Activated naive CD4-positive, alpha-beta T cell treated with anti-CD3 and anti-CD28 coated beads for 36 hours (primary cell): ENCODE measurements at regions of chr15 and their contacts with region 1.

Region 1: GRCh38 chr15:51982013-51982769 is 10.6 kb upstream of the LEO1 start:
- DNase-seq: peak; percentile 52
- H3K4me3 Mint-ChIP-seq: peak overlapping the region; percentile 62
- H3K27ac Mint-ChIP-seq: peak overlapping the region; percentile 25
- H3K4me1 Mint-ChIP-seq: peaks cover 10% of the 10 kb centered on the region
- H3K27me3 Mint-ChIP-seq: no peaks in the 10 kb centered on the region

Region 2: DNA sequence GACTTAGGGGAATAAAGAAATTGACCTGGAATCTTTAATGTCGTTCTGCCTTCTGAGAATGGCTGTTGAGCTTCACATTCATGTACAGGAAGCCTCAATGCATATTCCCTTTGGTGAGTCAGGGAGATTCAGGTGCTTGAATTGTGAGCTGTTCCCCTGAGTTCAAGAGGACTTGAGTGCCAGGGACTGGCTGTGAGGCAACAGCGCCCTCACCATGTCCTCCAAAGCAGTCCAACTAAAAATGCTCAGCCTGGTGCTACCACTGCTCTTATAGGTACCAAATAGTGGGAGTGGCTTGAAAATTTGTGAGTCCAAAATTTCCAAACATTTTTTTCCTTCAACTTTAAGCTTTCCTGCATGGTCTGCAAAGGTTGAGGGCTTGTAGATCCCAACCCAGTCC is 64.7 kb before region 1 on chr15:
- CTCF ChIA-PET with region 1: no interaction called
- intact Hi-C with region 1: no loop called
- DNase-seq: peak; percentile 36
- H3K4me3 Mint-ChIP-seq: no peak overlapping the region
- H3K27ac Mint-ChIP-seq: no peak overlapping the region
- H3K4me1 Mint-ChIP-seq: no peaks in the 10 kb centered on the region
- H3K27me3 Mint-ChIP-seq: no peaks in the 10 kb centered on the region

Region 3: DNA sequence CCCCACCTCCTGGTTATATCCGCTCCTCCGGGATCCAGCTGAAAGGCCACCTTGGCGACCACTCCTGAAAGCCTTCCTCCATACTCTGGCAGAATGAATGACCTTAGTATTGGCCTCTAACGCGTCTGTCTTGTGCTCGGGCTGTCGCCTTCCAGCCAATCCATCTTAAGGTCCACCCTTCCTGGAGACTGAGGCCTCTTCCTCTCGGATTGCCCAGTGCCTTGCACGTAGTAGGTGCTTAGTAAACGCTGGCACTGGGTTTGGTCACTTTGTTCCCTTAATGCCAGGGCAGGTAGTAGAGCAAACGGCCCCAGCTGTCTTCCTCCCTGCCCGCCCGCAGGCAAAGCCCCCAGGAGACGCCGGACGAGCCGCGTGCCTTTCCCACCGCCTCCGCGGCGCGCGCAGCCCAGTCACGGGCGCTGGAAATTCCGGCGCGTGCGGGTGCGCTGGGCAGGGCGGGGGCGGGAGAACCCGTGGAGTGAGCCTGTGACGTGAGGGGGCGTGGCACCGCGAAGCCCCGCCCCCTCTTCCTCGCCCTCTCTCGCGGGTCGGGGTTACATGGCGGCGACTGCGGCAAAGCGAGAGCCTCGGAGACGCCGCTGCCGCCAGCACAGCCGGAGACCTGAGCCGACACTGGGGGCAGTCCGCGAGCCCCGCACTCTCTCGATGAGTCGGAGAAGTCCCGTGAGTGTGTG is 36.6 kb after region 1 on chr15 and contains the start of gene MAPK6:
- CTCF ChIA-PET with region 1: no interaction called
- intact Hi-C with region 1: loop called (anchors 1 kb)
- DNase-seq: peak; percentile 93
- H3K4me3 Mint-ChIP-seq: peak within 1 kb of the TSS; percentile 97
- H3K27ac Mint-ChIP-seq: peak within 1 kb of the TSS; percentile 97
- H3K4me1 Mint-ChIP-seq: peaks cover 37% of the 10 kb centered on the region
- H3K27me3 Mint-ChIP-seq: no peaks in the 10 kb centered on the region
- total RNA-seq, gene MAPK6: 16.7 to 17.2 TPM

Region 4: DNA sequence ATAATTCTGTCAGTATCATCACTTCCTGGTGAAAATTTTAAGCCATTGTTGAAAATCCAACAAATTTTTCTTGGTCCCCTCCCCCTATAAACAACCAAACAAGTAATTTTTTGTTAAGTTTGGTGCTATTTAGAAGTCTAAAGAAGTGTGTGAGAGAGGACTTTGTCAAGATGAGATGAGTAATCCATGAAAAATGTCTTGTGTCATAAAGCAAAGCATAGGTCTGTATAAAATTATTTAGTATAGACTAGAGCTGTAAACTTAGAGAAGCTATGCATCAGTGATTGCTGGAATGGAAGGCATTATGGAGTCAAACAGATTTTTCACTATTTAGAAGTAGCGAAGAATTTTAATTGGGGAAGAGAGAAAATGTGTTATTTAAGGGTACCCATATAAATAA is 68.2 kb after region 1 on chr15:
- CTCF ChIA-PET with region 1: interaction called, 4 read pairs
- intact Hi-C with region 1: loop called (anchors 1 kb)
- DNase-seq: no peak
- H3K4me3 Mint-ChIP-seq: no peak overlapping the region
- H3K27ac Mint-ChIP-seq: no peak overlapping the region
- H3K4me1 Mint-ChIP-seq: peaks cover 15% of the 10 kb centered on the region
- H3K27me3 Mint-ChIP-seq: no peaks in the 10 kb centered on the region

Region 5: DNA sequence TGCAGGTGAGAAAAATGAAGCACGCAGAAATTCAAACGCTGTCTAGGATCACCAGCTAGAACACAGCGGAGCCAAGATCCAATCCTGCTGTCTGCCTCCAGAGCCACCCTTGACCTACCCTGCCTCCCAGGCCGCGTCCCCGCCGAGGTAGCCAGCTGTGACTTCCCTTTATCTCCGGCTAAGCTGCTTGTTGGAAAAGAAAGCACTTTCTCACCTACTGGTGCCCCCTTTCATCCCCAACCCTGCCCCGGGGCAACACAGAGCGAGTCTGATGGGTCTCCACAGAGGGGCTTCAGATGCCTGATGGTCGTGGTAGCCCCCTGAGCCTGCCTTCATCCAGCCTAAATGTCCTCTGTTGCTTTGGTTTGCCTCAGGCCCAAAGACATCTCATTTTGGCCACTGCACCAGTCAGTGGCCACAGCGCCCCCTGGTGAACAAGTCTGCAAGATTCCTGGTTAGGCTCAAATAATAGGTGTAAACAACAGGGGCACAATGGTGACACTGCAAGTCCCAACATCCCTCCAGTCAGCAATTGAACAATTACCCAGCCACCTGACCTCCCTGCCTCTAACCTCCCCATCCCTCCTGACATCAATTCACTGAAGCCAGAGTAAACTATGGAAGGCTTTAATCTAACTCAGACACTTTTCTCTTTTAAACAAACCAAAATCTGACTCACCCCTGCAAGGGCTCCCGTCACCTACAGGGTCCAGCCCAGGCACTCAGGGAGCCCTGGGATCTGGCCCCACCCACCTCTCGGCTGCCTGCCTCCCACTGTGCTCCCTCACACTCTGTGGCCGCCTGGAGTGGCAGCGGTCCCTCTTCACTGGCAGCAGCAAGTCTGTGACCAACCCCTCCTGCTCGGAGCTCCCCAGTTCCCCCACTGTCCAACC is 157.7 kb after region 1 on chr15:
- CTCF ChIA-PET with region 1: interaction called, 5 read pairs
- intact Hi-C with region 1: loop called (anchors 1 kb)
- DNase-seq: peak; percentile 82
- H3K4me3 Mint-ChIP-seq: no peak overlapping the region
- H3K27ac Mint-ChIP-seq: no peak overlapping the region
- H3K4me1 Mint-ChIP-seq: peaks cover 18% of the 10 kb centered on the region
- H3K27me3 Mint-ChIP-seq: no peaks in the 10 kb centered on the region

Region 6: DNA sequence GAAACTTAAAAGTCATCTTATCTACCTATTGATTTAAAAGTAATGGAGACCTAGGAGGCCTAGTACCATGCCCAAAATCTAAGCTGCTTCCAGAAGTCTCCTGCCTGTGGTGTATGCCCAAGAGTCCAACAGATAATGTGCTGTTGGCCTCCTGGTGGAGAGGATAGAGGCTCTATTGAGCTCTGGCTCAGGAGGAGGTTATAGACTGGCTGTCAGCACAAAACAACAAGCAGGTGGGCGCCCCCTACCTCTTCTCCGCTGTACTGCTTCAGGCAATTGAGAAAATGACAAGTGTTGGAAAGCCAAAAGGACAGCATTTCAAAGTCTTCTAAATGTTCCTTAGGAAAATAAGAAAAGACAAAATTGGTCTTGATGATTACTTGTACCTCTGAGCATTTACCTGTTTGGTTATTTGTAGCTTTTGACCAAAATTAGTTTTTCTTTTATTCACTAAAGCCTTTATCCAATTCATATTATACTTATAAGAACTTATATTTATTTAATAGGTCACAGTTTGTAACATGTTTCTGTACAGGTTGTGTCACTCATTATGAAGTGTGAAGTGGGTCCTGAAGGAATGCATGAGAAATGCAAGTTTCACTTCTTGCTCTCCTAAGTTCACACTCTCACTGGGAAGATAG is 226.2 kb after region 1 on chr15:
- CTCF ChIA-PET with region 1: interaction called, 5 read pairs
- intact Hi-C with region 1: loop called (anchors 1 kb)
- DNase-seq: peak; percentile 91
- H3K4me3 Mint-ChIP-seq: no peak overlapping the region
- H3K27ac Mint-ChIP-seq: no peak overlapping the region
- H3K4me1 Mint-ChIP-seq: no peaks in the 10 kb centered on the region
- H3K27me3 Mint-ChIP-seq: no peaks in the 10 kb centered on the region

Region 7: DNA sequence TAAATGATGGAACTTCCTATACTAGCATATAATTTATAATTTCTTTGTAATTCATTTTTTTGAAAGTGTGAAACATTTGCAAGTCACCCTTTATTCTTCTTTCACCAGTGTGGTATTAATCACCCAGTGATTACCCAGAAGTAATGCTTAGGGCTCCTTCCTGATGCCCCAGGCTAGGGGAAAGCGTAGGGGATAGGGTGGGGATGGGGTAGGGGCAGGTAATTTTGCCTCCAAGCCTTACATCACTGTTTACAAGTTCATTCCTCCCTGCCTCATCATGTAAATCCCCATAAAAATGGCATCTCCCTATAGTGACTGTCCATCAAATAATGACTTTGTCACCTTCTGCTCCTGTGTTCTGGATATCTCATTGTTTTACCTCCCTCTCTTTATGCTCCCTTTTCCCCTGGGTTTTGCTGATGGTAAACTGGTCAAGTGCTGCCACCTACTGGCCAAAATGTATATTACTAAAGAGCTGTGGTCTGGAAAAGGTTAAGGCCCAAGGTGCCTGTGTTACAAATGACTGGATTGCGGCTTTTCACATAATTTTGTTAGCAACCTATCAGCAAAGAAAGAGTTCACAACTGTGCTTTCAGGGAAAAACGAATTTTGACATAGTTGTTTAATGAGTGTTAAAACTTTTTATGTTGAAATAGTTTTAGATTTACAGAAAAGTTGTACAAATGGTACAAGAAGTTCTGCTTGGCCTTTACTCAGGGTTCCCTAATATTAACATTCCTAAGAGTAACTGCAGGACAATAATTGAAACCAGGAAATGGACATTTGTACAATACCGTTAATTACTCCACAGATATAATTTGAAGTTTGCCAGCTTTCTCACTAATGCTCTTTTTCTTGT is 753.3 kb after region 1 on chr15:
- CTCF ChIA-PET with region 1: no interaction called
- intact Hi-C with region 1: loop called (anchors 2 kb)
- DNase-seq: peak; percentile 84
- H3K4me3 Mint-ChIP-seq: no peak overlapping the region
- H3K27ac Mint-ChIP-seq: no peak overlapping the region
- H3K4me1 Mint-ChIP-seq: peaks cover 11% of the 10 kb centered on the region
- H3K27me3 Mint-ChIP-seq: no peaks in the 10 kb centered on the region